ENCODE measurements at regions of chr13 and their contacts with region 1.

Region 1: GRCh38 chr13:49495783-49496762 is at the start of gene PHF11:
- DNase-seq: peak; percentile 90
- H3K4me3 Mint-ChIP-seq: peak within 1 kb of the TSS; percentile 97
- H3K27ac Mint-ChIP-seq: peak within 1 kb of the TSS; percentile 100
- H3K4me1 Mint-ChIP-seq: peaks cover 60% of the 10 kb centered on the region
- H3K27me3 Mint-ChIP-seq: no peaks in the 10 kb centered on the region
- total RNA-seq, gene PHF11: 135 to 144 TPM

Region 2: DNA sequence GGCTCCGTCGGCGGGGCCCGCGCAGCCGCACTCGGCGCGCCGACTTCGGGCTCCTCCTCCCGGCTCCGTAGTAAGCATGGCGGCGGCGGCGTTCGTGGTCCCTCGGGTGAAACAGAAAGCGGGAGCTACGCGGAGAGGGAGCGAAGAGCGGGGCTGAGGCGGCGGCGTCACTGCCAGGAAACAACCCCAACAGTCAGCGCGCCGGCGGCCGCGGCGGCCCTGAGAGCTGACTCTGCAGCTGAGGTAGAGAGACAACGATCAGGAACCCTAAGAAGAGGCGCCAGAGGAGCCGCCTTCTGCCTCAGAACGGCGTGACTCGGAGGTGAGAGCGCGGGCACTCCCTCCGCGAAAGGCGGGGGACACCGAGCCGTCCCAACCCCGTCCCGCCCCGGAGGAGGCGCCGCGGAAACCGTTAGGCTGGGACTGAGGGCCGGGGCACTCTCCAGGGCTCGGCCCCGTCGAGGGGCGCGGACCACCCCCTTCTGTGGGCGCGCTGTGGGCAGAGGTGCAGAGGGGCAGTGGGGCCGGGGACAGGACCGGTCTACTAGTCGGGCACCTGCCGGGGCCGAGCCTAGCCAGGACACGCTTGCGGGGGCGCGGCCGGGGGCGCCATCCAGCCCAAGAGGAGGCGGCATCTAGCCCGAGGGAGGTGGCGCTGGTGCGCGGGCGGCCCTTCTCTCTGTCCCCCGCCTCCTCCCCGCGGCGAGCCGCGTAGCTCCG is 520.1 kb before region 1 on chr13 and contains the start of gene FNDC3A:
- CTCF ChIA-PET with region 1: no interaction called
- POLR2A ChIA-PET with region 1: interaction called, 15 read pairs
- DNase-seq: peak; percentile 89
- H3K4me3 Mint-ChIP-seq: peak within 1 kb of the TSS; percentile 94
- H3K27ac Mint-ChIP-seq: peak within 1 kb of the TSS; percentile 100
- H3K4me1 Mint-ChIP-seq: peaks cover 41% of the 10 kb centered on the region
- H3K27me3 Mint-ChIP-seq: no peaks in the 10 kb centered on the region
- total RNA-seq, gene FNDC3A: 27.0 to 27.8 TPM

Region 3: GRCh38 chr13:49307365-49307764 is 188.7 kb before region 1 on chr13:
- CTCF ChIA-PET with region 1: no interaction called
- POLR2A ChIA-PET with region 1: no interaction called
- DNase-seq: no peak
- H3K4me3 Mint-ChIP-seq: no peak overlapping the region
- H3K27ac Mint-ChIP-seq: no peak overlapping the region
- H3K4me1 Mint-ChIP-seq: no peaks in the 10 kb centered on the region
- H3K27me3 Mint-ChIP-seq: no peaks in the 10 kb centered on the region

Region 4: DNA sequence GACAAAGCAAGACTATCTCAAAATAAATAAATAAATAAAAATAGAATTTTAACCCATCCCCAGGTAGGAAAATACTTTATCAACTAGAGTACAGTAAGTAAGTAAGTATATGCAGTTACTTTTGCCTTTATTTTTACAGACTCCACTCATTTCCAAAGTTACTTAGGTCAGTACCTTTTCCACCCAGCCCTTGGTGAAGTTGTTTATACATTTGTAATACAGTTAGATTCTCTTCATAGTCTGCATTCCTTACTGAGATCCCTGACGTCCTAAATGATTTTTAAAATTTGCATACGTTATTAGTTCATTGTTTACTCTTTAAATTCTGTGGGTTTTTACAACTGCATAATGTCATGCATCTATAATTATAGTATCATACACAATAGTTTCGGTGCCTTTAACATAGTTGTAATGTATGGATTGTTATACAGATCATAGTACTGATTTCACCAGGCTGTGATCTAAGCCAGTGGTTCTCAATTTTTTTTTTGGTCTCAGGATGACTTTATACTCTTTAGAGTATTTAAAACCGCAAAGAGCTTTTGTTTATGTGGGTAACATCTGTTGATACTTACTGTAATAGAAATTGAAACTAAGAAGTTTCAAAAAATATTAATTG is 41.6 kb before region 1 on chr13:
- CTCF ChIA-PET with region 1: no interaction called
- POLR2A ChIA-PET with region 1: interaction called, 20 read pairs
- DNase-seq: no peak
- H3K4me3 Mint-ChIP-seq: peak overlapping the region; percentile 7
- H3K27ac Mint-ChIP-seq: peak overlapping the region; percentile 79
- H3K4me1 Mint-ChIP-seq: peaks cover 42% of the 10 kb centered on the region
- H3K27me3 Mint-ChIP-seq: no peaks in the 10 kb centered on the region

Region 5: DNA sequence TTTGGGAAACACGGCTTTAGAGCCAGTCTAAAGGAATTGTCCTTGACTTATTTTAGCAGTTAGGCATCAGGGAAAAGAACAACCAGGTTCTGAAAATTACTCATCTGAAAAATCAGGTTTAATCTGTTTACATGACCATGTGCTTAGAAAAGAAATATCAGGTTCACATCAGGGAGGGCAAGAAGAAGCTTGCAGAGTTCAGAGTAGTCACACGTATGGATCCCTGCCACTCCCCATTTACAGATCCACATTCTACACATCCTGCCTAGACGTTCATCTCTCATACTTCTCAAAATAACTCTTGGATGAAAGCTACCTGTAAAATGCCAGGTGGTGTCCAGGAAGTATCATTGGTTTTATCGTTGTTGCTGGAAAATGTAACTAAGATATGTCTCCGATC is 14.3 kb before region 1 on chr13:
- CTCF ChIA-PET with region 1: interaction called, 4 read pairs
- POLR2A ChIA-PET with region 1: interaction called, 21 read pairs
- DNase-seq: no peak
- H3K4me3 Mint-ChIP-seq: no peak overlapping the region
- H3K27ac Mint-ChIP-seq: no peak overlapping the region
- H3K4me1 Mint-ChIP-seq: no peaks in the 10 kb centered on the region
- H3K27me3 Mint-ChIP-seq: no peaks in the 10 kb centered on the region

Region 6: GRCh38 chr13:49585220-49586157 is 89.4 kb after region 1 on chr13 and contains the start of gene RCBTB1:
- CTCF ChIA-PET with region 1: no interaction called
- POLR2A ChIA-PET with region 1: interaction called, 22 read pairs
- DNase-seq: peak; percentile 73
- H3K4me3 Mint-ChIP-seq: peak within 1 kb of the TSS; percentile 89
- H3K27ac Mint-ChIP-seq: peak within 1 kb of the TSS; percentile 85
- H3K4me1 Mint-ChIP-seq: peaks cover 38% of the 10 kb centered on the region
- H3K27me3 Mint-ChIP-seq: no peaks in the 10 kb centered on the region
- total RNA-seq, gene RCBTB1: 18.5 to 19.0 TPM

Region 7: DNA sequence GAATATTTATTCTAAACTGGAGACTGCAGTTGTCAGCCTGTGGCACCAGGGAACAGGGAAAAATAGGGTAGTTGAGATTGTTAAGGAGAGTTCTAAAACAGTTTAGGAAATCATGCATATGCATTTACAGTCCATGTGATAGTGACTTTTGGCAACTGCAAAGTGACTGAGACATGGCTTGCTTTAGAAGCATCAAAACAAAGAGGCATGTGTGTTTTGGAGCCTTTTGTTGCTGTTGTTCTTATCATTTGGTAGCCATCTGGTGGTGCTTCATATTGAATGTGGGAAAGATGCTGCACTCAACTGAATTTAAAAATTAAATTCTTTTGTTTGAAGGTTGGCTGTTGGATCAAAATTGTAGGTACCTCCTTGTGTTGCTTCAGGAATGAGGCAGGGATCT is 205.4 kb after region 1 on chr13:
- CTCF ChIA-PET with region 1: no interaction called
- POLR2A ChIA-PET with region 1: no interaction called
- DNase-seq: no peak
- H3K4me3 Mint-ChIP-seq: no peak overlapping the region
- H3K27ac Mint-ChIP-seq: no peak overlapping the region
- H3K4me1 Mint-ChIP-seq: no peaks in the 10 kb centered on the region
- H3K27me3 Mint-ChIP-seq: no peaks in the 10 kb centered on the region

Region 8: DNA sequence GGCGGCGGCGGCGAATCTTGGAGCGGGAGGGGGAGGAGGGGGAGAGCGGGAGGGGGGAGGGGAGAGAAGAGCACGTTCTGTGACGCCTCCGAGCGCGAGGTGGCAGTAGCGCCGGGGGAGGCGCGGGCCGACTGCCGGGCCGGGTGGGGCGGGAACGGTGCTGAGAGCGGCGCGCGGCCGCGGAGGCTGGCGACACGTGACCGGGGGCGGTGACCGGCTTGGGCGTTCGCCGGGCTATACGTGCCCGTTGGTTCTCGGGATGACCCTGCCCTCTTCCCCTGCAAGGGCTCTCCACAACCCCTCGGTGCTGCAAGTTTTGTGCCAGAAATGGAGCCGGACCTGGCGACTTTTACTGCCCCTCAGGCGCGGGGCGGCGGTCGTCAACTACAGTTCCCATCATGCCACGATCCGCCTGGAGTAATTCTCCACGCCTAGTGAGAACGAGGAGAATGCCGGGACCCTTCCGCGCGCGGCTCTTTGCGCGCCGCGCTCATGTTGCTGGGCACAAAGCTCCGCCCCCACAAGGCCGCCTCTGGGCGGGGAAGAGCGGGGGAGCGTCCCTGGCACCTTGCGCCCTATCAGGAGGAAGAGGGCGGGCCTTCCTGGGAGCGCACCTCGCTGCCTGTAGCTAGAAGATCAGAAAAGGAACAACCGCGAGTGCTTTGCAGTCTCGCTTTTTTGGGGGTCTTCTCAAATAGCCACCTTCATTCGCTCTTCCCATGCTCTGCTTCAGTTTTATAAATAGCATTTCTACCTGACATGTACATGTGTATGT is 296.7 kb after region 1 on chr13 and contains the start of gene KPNA3:
- CTCF ChIA-PET with region 1: no interaction called
- POLR2A ChIA-PET with region 1: interaction called, 19 read pairs
- DNase-seq: peak; percentile 96
- H3K4me3 Mint-ChIP-seq: peak within 1 kb of the TSS; percentile 95
- H3K27ac Mint-ChIP-seq: peak within 1 kb of the TSS; percentile 97
- H3K4me1 Mint-ChIP-seq: peaks cover 32% of the 10 kb centered on the region
- H3K27me3 Mint-ChIP-seq: peaks cover 4% of the 10 kb centered on the region
- total RNA-seq, gene KPNA3: 34.9 to 36.1 TPM